Activated T-helper 1 cell treated with anti-CD3 and anti-CD28 coated beads, Interleukin-12 subunit alpha, Interleukin-12 subunit beta, Interleukin-2, Interleukin-4 antibody, amounts not matched to agents 30 ng/mL and 10 ng/mL and 1 ng/mL, durations not matched to agents 14 hours and 24 hours and 36 hours (primary cell): ENCODE measurements at regions of chr13 and their contacts with region 1.

Region 1: GRCh38 chr13:100392709-100393641 is 195.6 kb downstream of the GGACT start:
- DNase-seq: peak; percentile 60
- H3K4me3 Mint-ChIP-seq: peak overlapping the region; percentile 53
- H3K27ac Mint-ChIP-seq: peak overlapping the region; percentile 93
- H3K4me1 Mint-ChIP-seq: peaks cover 38% of the 10 kb centered on the region
- H3K27me3 Mint-ChIP-seq: no peaks in the 10 kb centered on the region

Region 2: DNA sequence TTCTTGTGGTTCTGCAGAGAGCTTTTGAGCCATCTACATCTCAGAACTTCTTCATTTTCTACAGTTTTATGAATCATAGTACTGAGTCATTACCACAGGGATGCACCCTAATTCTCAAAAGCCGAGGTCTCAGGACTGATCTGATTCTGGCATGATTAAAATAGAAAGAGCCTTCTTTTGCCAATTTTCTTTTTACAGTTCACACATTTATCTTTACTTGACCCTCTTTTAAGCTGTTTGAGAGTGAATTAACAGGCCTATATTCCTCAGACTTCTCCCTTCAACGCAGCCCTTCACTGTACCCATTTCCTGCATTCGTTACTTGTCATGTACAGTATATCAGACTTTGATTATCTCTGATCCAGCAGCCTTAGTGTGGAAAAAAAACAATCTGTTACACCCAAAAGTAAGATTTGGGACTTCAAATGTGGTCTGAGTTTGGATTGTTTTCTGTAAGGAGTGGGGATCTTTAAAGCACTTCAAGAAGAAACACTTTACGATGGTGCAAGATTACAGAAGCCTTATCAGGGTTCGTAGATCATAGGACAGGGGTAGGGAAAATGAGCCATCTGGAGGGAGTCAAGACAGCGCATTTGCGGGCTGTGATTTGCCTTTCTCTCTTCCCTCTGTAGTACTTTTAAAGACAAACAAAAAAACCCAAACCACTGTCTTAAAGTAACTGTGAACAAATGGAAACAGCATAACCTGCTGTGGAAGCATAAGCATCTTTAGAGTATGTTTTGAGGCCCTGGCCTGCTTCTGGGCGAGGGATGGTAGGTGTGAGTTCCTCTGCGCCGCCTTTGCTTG is 1070.5 kb before region 1 on chr13:
- intact Hi-C with region 1: loop called (anchors 5 kb)
- DNase-seq: no peak
- H3K4me3 Mint-ChIP-seq: peak overlapping the region; percentile 38
- H3K27ac Mint-ChIP-seq: peak overlapping the region; percentile 96
- H3K4me1 Mint-ChIP-seq: peaks cover 68% of the 10 kb centered on the region
- H3K27me3 Mint-ChIP-seq: no peaks in the 10 kb centered on the region

Region 3: GRCh38 chr13:99606324-99607066 is 786.5 kb before region 1 on chr13:
- intact Hi-C with region 1: loop called (anchors 2 kb)
- DNase-seq: peak; percentile 82
- H3K4me3 Mint-ChIP-seq: peak within 1 kb of the TSS; percentile 89
- H3K27ac Mint-ChIP-seq: peak within 1 kb of the TSS; percentile 81
- H3K4me1 Mint-ChIP-seq: peaks cover 29% of the 10 kb centered on the region
- H3K27me3 Mint-ChIP-seq: peaks cover 4% of the 10 kb centered on the region

Region 4: DNA sequence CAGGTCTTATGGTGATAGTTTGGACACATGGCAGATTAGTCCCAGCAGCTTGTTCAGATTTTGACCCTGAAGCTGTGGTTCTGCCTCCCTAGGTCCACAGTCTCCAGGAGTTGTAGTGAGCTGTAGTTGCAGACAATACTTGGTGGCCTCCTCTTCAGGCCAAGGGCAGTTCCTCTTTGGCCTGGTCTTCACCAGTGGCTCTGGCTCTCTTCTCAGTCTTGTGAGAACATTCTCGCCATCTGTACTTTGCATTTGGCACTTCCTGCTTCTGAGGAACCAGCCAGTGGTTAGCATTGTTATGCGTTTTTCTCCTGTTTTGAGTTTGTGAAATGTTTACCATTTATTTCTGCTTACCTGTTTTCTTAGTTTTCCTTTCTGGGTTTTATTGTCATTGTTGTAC is 263.4 kb before region 1 on chr13:
- intact Hi-C with region 1: loop called (anchors 1 kb)
- DNase-seq: peak; percentile 14
- H3K4me3 Mint-ChIP-seq: peak overlapping the region; percentile 44
- H3K27ac Mint-ChIP-seq: peak overlapping the region; percentile 77
- H3K4me1 Mint-ChIP-seq: peaks cover 39% of the 10 kb centered on the region
- H3K27me3 Mint-ChIP-seq: no peaks in the 10 kb centered on the region

Region 5: DNA sequence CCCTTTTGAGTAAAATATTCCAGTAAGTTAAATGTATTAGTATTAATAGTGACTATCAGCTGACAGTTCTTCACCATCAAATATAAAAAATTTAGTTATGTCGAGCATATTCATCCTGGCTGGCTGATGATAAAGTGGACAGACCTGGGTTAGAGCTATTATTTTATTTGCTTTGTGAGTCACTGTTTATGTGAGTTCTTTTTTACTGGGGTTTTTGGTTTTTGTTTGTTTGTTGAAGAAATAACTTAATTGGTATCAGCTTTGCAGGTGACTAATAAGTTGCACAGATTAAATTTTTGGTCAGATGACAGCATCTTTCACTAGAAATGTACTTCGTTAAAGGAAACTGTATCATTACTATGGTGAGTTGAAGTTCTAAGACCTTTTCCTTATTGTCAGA is 29.1 kb before region 1 on chr13:
- intact Hi-C with region 1: loop called (anchors 1 kb)
- DNase-seq: no peak
- H3K4me3 Mint-ChIP-seq: no peak overlapping the region
- H3K27ac Mint-ChIP-seq: no peak overlapping the region
- H3K4me1 Mint-ChIP-seq: peaks cover 14% of the 10 kb centered on the region
- H3K27me3 Mint-ChIP-seq: no peaks in the 10 kb centered on the region

Region 6: DNA sequence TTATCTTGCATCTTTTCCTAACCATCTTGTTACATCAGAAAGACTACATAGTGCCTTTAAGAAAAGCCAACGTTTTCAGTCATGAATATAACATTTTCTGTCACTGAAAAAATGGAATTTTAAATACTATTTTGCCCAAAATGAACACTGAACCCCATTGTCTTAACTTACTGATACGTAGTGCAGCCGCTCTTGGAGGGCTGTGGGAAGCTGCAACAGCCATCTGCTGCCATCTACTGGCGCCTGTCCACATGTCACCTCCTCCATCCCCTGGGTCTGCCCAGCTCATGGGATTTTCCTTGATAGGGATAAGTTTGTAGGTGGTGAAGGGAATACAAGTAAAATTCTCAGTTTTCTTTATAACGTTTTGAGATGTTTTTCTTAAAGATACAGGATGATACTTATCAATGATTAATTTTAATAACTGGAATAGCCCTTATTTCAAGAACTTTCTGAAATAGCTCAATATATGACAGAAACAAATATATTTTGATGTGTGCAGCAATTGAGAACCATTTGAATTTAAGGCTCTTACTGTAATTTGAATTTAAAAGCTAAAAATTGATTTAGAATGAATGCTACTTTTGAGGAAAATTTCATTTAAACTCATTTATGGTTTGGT is 121.9 kb after region 1 on chr13:
- intact Hi-C with region 1: loop called (anchors 2 kb)
- DNase-seq: peak; percentile 52
- H3K4me3 Mint-ChIP-seq: no peak overlapping the region
- H3K27ac Mint-ChIP-seq: no peak overlapping the region
- H3K4me1 Mint-ChIP-seq: peaks cover 54% of the 10 kb centered on the region
- H3K27me3 Mint-ChIP-seq: peaks cover 7% of the 10 kb centered on the region

Region 7: GRCh38 chr13:100530671-100531213 is 137.8 kb after region 1 on chr13:
- intact Hi-C with region 1: no loop called
- DNase-seq: no peak
- H3K4me3 Mint-ChIP-seq: no peak overlapping the region
- H3K27ac Mint-ChIP-seq: no peak overlapping the region
- H3K4me1 Mint-ChIP-seq: no peaks in the 10 kb centered on the region
- H3K27me3 Mint-ChIP-seq: no peaks in the 10 kb centered on the region